ENCODE measurements at regions of chr20 and their contacts with region 1.

Region 1: GRCh38 chr20:34689486-34689885 is 12.6 kb upstream of the PIGU start:
- DNase-seq: no peak
- H3K4me3 ChIP-seq: no peak overlapping the region
- H3K27ac ChIP-seq: no peak overlapping the region
- H3K4me1 ChIP-seq: no peaks in the 10 kb centered on the region
- H3K27me3 ChIP-seq: no peaks in the 10 kb centered on the region
- CTCF ChIP-seq: no peak

Region 2: DNA sequence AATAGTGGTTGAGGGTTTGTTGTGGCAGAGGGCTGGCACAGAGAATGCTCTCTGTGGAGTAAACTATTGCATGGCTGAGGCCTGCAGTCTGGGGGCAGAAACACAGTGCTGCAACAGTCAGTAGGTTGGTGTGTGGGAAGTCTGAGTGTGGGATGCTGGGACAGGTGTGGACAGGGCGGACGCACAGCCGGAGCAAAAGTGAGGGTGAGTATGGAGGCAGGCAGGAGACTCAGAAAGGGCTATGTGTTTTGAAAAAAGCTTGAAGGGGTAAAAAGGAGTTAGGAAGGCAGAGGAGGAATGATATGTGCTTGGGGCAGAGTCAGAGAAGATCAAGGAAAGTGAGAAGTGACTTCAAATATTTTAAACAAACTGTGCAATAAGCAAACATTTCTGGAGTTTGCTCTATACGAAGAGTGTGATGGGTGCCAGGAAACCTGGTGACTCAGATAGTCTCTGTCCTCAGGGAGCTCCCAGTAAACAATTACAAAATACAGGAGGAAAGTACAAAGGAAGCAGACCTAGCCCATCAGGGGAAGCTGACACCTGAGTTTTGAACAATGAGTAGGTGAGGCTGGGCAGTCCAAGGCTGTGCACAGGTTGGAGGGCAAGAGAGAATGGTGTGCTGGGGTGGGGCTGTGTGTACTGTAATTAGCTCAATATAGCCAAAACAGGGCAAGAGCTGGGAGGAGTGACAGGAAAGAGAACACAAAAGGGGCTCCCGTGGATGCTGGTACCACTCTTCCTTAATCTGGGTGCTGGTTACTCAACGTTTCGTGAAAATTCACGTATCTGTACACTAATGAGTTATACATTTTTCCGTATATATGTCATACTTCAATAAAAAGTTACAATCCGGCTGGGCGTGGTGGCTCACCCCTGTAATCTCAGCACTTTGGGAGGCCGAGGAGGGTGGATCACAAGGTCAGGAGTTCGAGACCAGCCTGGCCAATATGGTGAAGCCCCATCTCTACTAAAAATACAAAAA is 67.8 kb before region 1 on chr20:
- CTCF ChIA-PET with region 1: no interaction called
- dilution Hi-C with region 1: loop called (anchors 5 kb)
- in situ Hi-C with region 1: no loop called
- intact Hi-C with region 1: no loop called
- DNase-seq: peak; percentile 64
- H3K4me3 ChIP-seq: no peak overlapping the region
- H3K27ac ChIP-seq: peak overlapping the region; percentile 13
- H3K4me1 ChIP-seq: peaks cover 7% of the 10 kb centered on the region
- H3K27me3 ChIP-seq: no peaks in the 10 kb centered on the region
- CTCF ChIP-seq: no peak

Region 3: GRCh38 chr20:34753706-34754461 is 64.4 kb after region 1 on chr20:
- CTCF ChIA-PET with region 1: no interaction called
- dilution Hi-C with region 1: loop called (anchors 5 kb)
- in situ Hi-C with region 1: no loop called
- intact Hi-C with region 1: no loop called
- DNase-seq: peak; percentile 10
- H3K4me3 ChIP-seq: no peak overlapping the region
- H3K27ac ChIP-seq: peak overlapping the region; percentile 13
- H3K4me1 ChIP-seq: peaks cover 9% of the 10 kb centered on the region
- H3K27me3 ChIP-seq: no peaks in the 10 kb centered on the region
- CTCF ChIP-seq: no peak

Measured in mammary epithelial cell (primary cell).